H1 (cell line): ENCODE measurements at regions of chr22 and their contacts with region 1.

Region 1: DNA sequence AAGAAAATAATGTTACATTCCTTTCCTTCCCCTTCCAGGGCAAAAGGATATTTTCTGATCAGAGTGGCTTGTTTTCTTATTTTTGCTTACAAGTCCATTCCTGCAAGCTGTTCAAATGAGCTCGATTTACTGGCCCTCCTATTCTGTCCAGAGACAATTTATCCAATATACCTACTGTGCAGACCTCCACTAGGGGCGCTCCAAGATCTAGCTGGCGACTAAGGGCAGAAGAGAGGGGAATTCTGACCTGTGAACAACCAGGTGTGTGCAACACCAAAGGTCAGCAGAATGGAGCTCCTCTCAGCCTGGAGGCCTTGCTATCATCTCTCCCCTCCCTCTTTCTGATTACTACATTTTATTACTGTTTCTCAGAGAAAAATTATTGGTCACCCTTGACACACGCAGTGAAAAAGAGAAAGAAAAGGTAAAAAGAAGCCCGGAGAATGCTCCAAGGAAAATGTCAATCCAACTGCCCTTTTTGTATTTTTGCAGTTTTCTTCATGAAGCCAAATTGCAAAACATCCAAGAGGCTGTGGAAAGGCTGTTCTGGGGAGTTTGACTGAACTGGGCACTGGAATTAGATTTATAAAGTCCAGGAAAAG is 3.2 kb downstream of the SEZ6L start:
- DNase-seq: peak in 1 of 2 experiments; percentile 72
- H3K4me3 ChIP-seq: no peak overlapping the region
- H3K27ac ChIP-seq: no peak overlapping the region
- H3K4me1 ChIP-seq: peaks cover 4 to 21% (median 10%) of the 10 kb centered on the region in 4 experiments
- H3K27me3 ChIP-seq: peaks cover 19 to 40% (median 36%) of the 10 kb centered on the region in 4 experiments
- CTCF ChIP-seq: peak; percentile 53 to 86 (median 79)
- EP300 ChIP-seq: no peak
- POLR2A ChIP-seq: no peak
- RAD21 ChIP-seq: peak; percentile 74 to 83

Region 2: DNA sequence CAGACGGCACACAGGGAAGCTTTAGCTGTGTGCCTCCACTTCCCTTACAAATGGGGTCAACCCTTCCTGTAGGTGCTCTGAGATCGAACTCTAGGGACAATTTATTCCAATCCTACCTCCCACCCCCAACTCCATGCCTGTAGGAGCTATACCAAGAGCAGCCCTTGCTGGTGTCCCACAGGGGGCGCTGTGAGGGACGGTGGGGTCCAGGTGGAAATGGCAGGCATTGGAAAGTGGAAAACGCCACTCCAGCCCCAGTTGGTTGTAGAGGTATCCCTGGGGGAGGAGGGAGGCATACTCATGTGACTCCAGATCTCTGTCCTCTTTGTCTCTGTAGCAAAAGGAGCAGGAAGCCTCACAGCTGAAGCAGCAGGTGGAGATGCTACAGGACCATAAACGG is 269.2 kb before region 1 on chr22:
- CTCF ChIA-PET with region 1: interaction called, 13 read pairs
- POLR2A ChIA-PET with region 1: no interaction called
- DNase-seq: peak; percentile 31 to 90
- H3K4me3 ChIP-seq: no peak overlapping the region
- H3K27ac ChIP-seq: no peak overlapping the region
- H3K4me1 ChIP-seq: 0 out of 7 replicates have a peak, but pooled peaks cover 0 to 4% (median 0%) of the 10 kb centered on the region in 4 experiments
- H3K27me3 ChIP-seq: no peaks in the 10 kb centered on the region
- CTCF ChIP-seq: peak; percentile 87 to 92 (median 88)
- EP300 ChIP-seq: no peak
- POLR2A ChIP-seq: no peak
- RAD21 ChIP-seq: peak; percentile 61 to 78

Region 3: DNA sequence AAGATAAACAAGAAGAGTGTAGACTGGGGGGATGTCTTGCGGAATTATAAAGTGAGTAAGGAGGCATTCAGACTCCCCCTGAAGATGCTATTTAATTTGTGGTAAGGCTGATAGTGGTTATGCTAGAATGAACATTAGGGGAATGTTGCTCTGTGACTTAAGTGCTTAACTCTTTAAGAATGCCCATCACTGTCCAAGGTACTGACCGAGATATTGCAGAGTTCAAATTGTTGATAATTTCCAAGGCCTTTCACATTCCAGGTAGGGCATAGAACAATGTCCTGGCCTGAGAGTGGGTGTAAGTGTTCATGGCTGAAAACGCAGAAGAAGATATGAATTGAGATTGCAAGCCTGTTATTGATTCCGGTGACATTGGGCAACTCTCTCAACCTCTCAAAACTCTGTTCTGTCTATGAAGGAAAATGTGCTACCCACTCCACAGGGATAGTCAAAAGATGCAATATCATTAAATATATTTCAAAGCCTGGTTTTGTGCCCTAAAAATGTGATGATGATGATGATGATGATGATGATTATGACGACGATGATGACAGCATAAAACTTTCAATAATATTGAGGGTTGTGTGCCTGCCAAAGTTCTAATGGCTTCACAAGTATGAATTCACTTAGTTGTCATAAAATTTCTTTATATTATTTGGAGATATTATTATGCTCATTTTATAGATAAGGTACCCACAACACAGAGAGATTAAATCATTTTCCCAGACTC is 93.3 kb before region 1 on chr22:
- CTCF ChIA-PET with region 1: no interaction called
- POLR2A ChIA-PET with region 1: no interaction called
- DNase-seq: no peak
- H3K4me3 ChIP-seq: no peak overlapping the region
- H3K27ac ChIP-seq: no peak overlapping the region
- H3K4me1 ChIP-seq: no peaks in the 10 kb centered on the region
- H3K27me3 ChIP-seq: no peaks in the 10 kb centered on the region; a peak in 1 of 7 replicates
- CTCF ChIP-seq: no peak
- EP300 ChIP-seq: no peak
- POLR2A ChIP-seq: no peak
- RAD21 ChIP-seq: no peak

Region 4: DNA sequence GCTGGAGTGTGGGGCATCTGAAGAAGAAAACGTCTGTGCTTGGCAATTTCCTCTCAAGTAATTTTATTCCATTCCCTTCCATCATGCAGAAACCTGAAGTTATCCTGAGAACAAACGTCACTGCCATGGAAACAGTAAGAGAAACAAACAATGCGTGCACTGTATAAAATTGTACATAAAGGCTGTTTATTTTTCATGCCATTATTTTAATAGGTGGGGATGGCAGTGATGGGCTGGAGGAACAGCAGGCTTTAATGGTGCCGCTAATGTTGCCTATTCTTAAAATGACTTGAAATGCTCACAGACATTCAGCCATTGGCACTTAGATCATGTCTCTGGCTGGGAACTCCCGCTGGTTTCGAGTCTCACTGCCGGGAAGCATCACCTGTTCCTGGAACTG is 10.7 kb before region 1 on chr22:
- CTCF ChIA-PET with region 1: interaction called, 15 read pairs
- POLR2A ChIA-PET with region 1: no interaction called
- DNase-seq: no peak
- H3K4me3 ChIP-seq: no peak overlapping the region
- H3K27ac ChIP-seq: no peak overlapping the region
- H3K4me1 ChIP-seq: no peaks in the 10 kb centered on the region
- H3K27me3 ChIP-seq: 0 out of 7 replicates have a peak, but pooled peaks cover 0 to 2% (median 0%) of the 10 kb centered on the region in 4 experiments
- CTCF ChIP-seq: no peak
- EP300 ChIP-seq: no peak
- POLR2A ChIP-seq: no peak
- RAD21 ChIP-seq: no peak

Region 5: GRCh38 chr22:26199667-26200066 is 27.2 kb after region 1 on chr22:
- CTCF ChIA-PET with region 1: interaction called, 20 read pairs
- POLR2A ChIA-PET with region 1: no interaction called
- DNase-seq: no peak
- H3K4me3 ChIP-seq: no peak overlapping the region
- H3K27ac ChIP-seq: no peak overlapping the region
- H3K4me1 ChIP-seq: no peaks in the 10 kb centered on the region; a peak in 1 of 7 replicates
- H3K27me3 ChIP-seq: no peaks in the 10 kb centered on the region; a peak in 1 of 7 replicates
- CTCF ChIP-seq: peak in 1 of 3 experiments; percentile 43; a peak in 2 of 4 replicates
- EP300 ChIP-seq: no peak
- POLR2A ChIP-seq: no peak
- RAD21 ChIP-seq: peak; percentile 20 to 27; a peak in 3 of 4 replicates

Region 6: GRCh38 chr22:26259519-26259918 is 87.0 kb after region 1 on chr22:
- CTCF ChIA-PET with region 1: interaction called, 13 read pairs
- POLR2A ChIA-PET with region 1: no interaction called
- DNase-seq: peak; percentile 44 to 73
- H3K4me3 ChIP-seq: no peak overlapping the region
- H3K27ac ChIP-seq: no peak overlapping the region
- H3K4me1 ChIP-seq: no peaks in the 10 kb centered on the region
- H3K27me3 ChIP-seq: peaks cover 0 to 3% (median 0%) of the 10 kb centered on the region in 4 experiments; a peak in 2 of 7 replicates
- CTCF ChIP-seq: 0 out of 4 replicates have a peak, but pooled peaks of 1 of the 3 experiments have one; percentile 6
- EP300 ChIP-seq: no peak
- POLR2A ChIP-seq: no peak
- RAD21 ChIP-seq: peak; percentile 50 to 53

Region 7: DNA sequence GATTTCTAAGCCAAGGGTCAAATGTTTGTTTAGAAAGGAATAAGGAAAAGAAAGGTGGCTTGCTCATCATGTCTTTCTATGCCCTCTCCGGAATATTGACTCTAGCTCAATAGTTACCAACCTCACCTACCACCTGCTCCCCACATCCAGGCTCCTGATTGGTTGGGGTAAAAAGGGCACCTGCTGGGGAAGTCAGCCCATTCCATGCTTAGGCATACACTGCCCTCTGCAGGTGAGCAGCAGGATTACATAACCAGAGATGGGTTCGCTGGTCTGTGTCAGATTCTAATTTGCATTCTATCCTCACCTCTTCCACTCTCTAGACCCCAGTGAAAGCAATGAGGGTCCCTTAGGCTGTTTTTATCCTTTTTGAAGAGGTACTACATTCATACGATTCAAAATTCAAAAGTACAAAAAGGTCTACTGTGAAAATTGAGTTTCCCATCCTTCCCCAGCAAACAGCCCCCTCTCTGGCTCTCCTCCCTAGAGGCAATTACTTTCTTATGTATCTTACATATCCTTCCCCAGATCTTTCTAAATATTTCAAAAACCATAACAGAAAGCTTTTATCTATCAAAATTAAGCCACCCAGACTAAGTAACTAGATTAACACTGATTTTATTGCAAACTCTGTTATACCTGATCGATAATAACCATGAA is 158.6 kb after region 1 on chr22:
- CTCF ChIA-PET with region 1: interaction called, 246 read pairs
- POLR2A ChIA-PET with region 1: no interaction called
- DNase-seq: peak; percentile 29 to 86
- H3K4me3 ChIP-seq: no peak overlapping the region
- H3K27ac ChIP-seq: no peak overlapping the region
- H3K4me1 ChIP-seq: no peaks in the 10 kb centered on the region
- H3K27me3 ChIP-seq: peaks cover 0 to 3% (median under 1%) of the 10 kb centered on the region in 4 experiments; a peak in 1 of 7 replicates
- CTCF ChIP-seq: peak; percentile 88 to 95 (median 94)
- EP300 ChIP-seq: no peak
- POLR2A ChIP-seq: no peak
- RAD21 ChIP-seq: peak; percentile 99 to 100